CD8-positive, alpha-beta T cell (primary cell): ENCODE measurements at regions of chr20 and their contacts with region 1.

Region 1: DNA sequence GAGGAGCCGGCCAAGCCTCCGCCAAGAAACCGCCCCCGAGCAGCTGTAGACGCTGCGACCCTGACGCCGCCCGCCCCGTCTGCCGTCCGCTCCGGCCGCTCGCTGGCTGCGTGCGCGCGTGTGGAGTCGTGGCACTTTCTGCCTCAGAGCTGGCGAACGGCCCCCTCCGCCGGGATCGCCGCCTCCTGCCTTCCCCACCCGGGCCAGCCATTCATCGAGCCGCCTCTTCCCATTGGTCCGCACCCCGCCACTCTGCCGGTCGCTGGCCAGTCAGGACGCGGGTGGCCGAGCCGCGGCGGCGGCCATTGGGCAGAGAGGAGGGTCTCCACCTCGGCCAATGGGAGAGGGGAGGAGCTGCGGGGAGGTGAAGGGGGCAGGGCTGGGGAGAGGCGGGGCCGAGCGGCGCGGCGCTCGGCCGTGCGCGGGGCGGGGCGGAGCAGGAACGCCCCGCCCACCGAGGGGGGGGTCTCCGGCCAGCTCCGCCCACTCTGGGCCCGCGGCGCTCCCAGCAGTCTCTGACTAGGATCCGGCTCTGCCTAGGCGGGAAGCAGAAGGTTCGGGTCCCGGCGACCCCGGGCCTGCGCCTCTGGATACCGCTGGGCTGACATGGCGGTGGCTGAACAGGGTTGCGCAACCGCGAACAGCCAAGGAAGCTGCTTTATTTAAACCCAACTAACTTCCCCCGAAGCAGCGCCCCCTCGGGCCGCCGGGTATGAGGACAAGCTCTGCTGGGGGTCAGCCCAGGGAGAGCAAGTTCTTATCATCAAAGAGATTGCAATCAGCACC is at the start of gene RRBP1:
- DNase-seq: peak; percentile 94 to 98 (median 96)
- ATAC-seq: peak; percentile 91
- H3K4me3 ChIP-seq: peak within 1 kb of the TSS; percentile 50 to 71
- H3K4me3 Mint-ChIP-seq: peak within 1 kb of the TSS; percentile 88
- H3K27ac ChIP-seq: peak within 1 kb of the TSS; percentile 40 to 69
- H3K27ac Mint-ChIP-seq: peak within 1 kb of the TSS; percentile 86
- H3K4me1 ChIP-seq: peaks cover 18% of the 10 kb centered on the region
- H3K4me1 Mint-ChIP-seq: peaks cover 19% of the 10 kb centered on the region
- H3K27me3 ChIP-seq: no peaks in the 10 kb centered on the region
- H3K27me3 Mint-ChIP-seq: peaks cover 25% of the 10 kb centered on the region
- CTCF ChIP-seq: peak; percentile 83
- total RNA-seq, gene RRBP1: 26.4 to 26.5 TPM

Region 2: DNA sequence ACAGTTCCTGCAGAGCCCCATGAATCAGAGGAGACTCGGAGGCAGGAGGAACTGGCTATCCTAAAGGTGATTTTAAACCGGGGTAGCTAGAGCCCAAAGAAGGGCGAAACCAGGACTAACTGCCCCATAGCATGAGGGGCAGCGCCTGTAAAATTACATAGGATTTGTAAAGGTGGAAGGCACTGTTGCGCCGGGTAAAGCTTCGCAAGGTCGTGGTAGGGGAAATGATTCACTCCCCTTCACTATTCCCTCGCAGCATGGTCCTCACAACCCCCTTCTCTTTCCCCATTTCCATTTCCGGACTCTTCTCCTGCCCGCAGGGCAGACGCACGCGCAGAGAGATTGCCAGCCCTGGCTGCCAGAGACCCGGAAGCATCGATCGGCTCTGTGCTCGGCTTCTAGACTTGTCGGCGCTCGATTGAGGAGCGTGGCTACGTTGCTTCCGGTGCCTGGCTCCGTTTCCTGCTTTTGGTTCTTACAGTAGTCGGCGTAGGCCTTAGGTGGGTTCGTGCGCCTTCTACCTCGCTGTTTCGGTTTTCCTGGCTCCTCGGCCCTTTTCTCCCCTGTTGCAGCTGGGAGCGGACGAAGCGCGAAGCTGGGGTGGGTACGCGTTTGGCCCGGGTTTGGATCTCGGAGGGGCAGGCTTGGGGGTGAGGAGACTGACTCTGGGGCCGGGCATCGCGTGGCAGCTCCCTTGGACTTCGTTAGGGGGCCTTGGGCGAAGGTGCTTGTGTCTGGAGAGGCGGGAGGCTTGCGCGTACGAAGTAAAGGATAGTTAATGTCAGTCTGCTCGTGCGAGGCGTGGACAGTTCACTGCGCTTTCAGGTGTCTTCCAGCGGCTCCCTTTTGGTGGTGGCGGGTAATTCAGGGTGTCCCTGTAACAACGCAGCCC is 952.5 kb before region 1 on chr20 and contains the start of gene SNRPB2:
- CTCF ChIA-PET with region 1: no interaction called
- POLR2A ChIA-PET with region 1: no interaction called
- intact Hi-C with region 1: loop called in 1 of 2 experiments (anchors 5 kb)
- DNase-seq: peak; percentile 81 to 96 (median 91)
- ATAC-seq: peak; percentile 95
- H3K4me3 ChIP-seq: peak within 1 kb of the TSS; percentile 84 to 97
- H3K4me3 Mint-ChIP-seq: peak within 1 kb of the TSS; percentile 100
- H3K27ac ChIP-seq: peak within 1 kb of the TSS; percentile 93 to 94
- H3K27ac Mint-ChIP-seq: peak within 1 kb of the TSS; percentile 100
- H3K4me1 ChIP-seq: peaks cover 36% of the 10 kb centered on the region
- H3K4me1 Mint-ChIP-seq: peaks cover 52% of the 10 kb centered on the region
- H3K27me3 ChIP-seq: peaks cover 0 to 12% of the 10 kb centered on the region in 2 experiments
- H3K27me3 Mint-ChIP-seq: peaks cover 15% of the 10 kb centered on the region
- CTCF ChIP-seq: no peak
- total RNA-seq, gene SNRPB2: 49.0 to 50.4 TPM

Region 3: DNA sequence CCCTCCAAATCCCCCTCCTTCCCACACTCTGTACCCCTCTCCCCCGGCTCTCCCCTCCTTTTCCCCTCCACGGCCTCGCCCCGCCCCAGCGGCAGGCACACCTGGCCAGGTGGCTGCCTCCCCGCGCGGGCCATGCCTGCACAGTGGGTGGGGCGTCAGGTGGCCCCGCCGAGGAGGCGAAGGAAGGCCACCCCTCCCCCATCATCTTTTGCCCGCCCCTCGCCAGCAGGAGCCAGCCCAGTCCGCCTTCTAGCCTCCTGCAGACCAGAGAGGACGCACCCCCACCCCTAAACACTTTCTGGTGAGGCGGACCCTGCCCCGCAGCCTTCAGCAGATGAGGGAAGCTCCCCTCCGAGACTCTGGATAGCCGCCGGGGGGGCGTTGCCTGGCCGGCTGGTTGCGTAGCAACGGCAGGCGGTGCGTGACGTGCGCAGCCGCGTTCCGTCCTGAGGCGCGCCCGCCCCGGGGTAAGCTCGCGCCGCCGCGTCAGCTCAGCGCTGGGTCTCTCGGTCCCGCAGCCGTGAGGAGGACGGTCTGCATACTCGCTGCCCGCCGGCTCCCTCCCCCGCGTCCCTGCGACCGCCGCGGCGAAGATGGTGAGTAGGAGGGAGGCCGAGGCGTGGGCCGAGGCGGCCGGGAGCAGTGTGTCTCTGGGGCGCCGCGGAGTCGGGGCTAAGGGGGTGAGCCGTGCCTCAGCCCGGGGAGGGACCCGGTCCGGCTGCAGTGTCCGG is 112.5 kb before region 1 on chr20 and contains the start of gene DSTN:
- CTCF ChIA-PET with region 1: interaction called, 16 read pairs
- POLR2A ChIA-PET with region 1: interaction called, 5 read pairs
- intact Hi-C with region 1: loop called (anchors 1 kb)
- DNase-seq: peak; percentile 76 to 94 (median 86)
- ATAC-seq: peak; percentile 88
- H3K4me3 ChIP-seq: peak within 1 kb of the TSS; percentile 80 to 92
- H3K4me3 Mint-ChIP-seq: peak within 1 kb of the TSS; percentile 85
- H3K27ac ChIP-seq: peak within 1 kb of the TSS; percentile 73 to 81
- H3K27ac Mint-ChIP-seq: peak within 1 kb of the TSS; percentile 91
- H3K4me1 ChIP-seq: peaks cover 24% of the 10 kb centered on the region
- H3K4me1 Mint-ChIP-seq: peaks cover 28% of the 10 kb centered on the region
- H3K27me3 ChIP-seq: no peaks in the 10 kb centered on the region
- H3K27me3 Mint-ChIP-seq: no peaks in the 10 kb centered on the region
- CTCF ChIP-seq: no peak
- total RNA-seq, gene DSTN: 40.5 to 42.9 TPM

Region 4: GRCh38 chr20:17938871-17939619 is 256.7 kb after region 1 on chr20:
- CTCF ChIA-PET with region 1: interaction called, 18 read pairs
- POLR2A ChIA-PET with region 1: interaction called, 4 read pairs
- intact Hi-C with region 1: loop called in 1 of 2 experiments (anchors 2 kb)
- DNase-seq: peak; percentile 17 to 81 (median 57)
- ATAC-seq: peak; percentile 95
- H3K4me3 ChIP-seq: no peak overlapping the region
- H3K4me3 Mint-ChIP-seq: peak overlapping the region; percentile 50
- H3K27ac ChIP-seq: no peak overlapping the region
- H3K27ac Mint-ChIP-seq: peak overlapping the region; percentile 71
- H3K4me1 ChIP-seq: peaks cover 12% of the 10 kb centered on the region
- H3K4me1 Mint-ChIP-seq: peaks cover 16% of the 10 kb centered on the region
- H3K27me3 ChIP-seq: no peaks in the 10 kb centered on the region
- H3K27me3 Mint-ChIP-seq: no peaks in the 10 kb centered on the region
- CTCF ChIP-seq: peak; percentile 87

Region 5: GRCh38 chr20:18137412-18138265 is 455.3 kb after region 1 on chr20 and contains the starts of genes KAT14 and PET117:
- CTCF ChIA-PET with region 1: no interaction called
- POLR2A ChIA-PET with region 1: interaction called, 4 read pairs
- intact Hi-C with region 1: loop called (anchors 1 to 2 kb)
- DNase-seq: peak; percentile 84 to 97 (median 90)
- ATAC-seq: peak; percentile 91
- H3K4me3 ChIP-seq: peak within 1 kb of the TSS; percentile 89 to 98
- H3K4me3 Mint-ChIP-seq: peak within 1 kb of the TSS; percentile 88
- H3K27ac ChIP-seq: peak within 1 kb of the TSS; percentile 84 to 91
- H3K27ac Mint-ChIP-seq: peak within 1 kb of the TSS; percentile 91
- H3K4me1 ChIP-seq: peaks cover 19% of the 10 kb centered on the region
- H3K4me1 Mint-ChIP-seq: peaks cover 36% of the 10 kb centered on the region
- H3K27me3 ChIP-seq: no peaks in the 10 kb centered on the region
- H3K27me3 Mint-ChIP-seq: no peaks in the 10 kb centered on the region
- CTCF ChIP-seq: no peak
- total RNA-seq, gene KAT14: 7.8 to 8.4 TPM
- total RNA-seq, gene PET117: 15.3 to 17.3 TPM

Region 6: DNA sequence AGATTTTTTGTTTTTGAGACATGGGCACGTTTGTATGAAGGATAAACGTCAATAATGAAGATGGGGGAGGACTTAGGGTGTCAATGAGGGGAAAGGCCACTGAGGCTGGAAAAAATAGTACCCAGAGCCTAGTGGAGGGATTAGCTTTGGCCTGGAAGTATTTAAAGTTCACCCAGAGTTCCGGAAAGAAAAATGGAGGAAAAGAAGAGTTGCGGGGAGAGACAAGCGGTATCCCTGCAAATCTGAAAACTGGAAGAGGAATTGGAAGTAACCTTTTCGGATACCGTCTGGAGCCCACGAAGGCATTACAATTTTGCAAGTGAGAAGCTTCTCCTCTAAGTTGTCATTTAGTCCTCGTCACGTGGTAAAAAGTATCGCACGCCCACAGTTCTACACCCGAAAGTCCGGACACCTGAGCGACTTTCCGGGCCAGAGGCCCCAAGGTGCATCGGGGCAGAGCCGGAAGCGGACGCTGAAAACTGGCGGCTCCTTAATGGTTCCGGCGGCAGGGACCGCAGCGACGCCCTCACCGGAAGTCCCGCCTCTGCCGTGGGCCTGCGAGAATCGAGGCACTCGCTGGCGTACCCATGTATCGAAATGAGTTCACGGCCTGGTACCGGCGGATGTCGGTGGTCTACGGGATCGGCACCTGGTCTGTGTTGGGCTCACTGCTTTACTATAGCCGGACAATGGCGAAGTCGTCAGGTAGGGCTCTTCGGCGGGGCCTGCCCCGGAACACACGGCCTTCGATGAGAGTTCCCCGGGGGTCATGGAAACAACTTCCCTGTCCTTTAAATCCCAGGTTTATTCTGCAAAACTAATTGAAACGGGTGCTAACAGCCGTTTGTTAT is 884.8 kb after region 1 on chr20 and contains the start of gene SMIM26:
- CTCF ChIA-PET with region 1: no interaction called
- POLR2A ChIA-PET with region 1: no interaction called
- intact Hi-C with region 1: loop called in 1 of 2 experiments (anchors 10 kb)
- DNase-seq: peak; percentile 88 to 97 (median 95)
- ATAC-seq: peak; percentile 98
- H3K4me3 ChIP-seq: peak within 1 kb of the TSS; percentile 54 to 90
- H3K4me3 Mint-ChIP-seq: peak within 1 kb of the TSS; percentile 96
- H3K27ac ChIP-seq: peak within 1 kb of the TSS; percentile 79 to 94
- H3K27ac Mint-ChIP-seq: peak within 1 kb of the TSS; percentile 99
- H3K4me1 ChIP-seq: peaks cover 14% of the 10 kb centered on the region
- H3K4me1 Mint-ChIP-seq: peaks cover 22% of the 10 kb centered on the region
- H3K27me3 ChIP-seq: no peaks in the 10 kb centered on the region
- H3K27me3 Mint-ChIP-seq: no peaks in the 10 kb centered on the region
- CTCF ChIP-seq: no peak
- total RNA-seq, gene SMIM26: 63.9 to 64.8 TPM